B cell (primary cell): ENCODE measurements at regions of chr7 and their contacts with region 1.

Region 1: GRCh38 chr7:130069978-130070860 is at the start of gene KLHDC10:
- DNase-seq: peak; percentile 97
- ATAC-seq: peak; percentile 93
- H3K4me3 ChIP-seq: peak within 1 kb of the TSS; percentile 68 to 90 (median 69)
- H3K4me3 Mint-ChIP-seq: peak within 1 kb of the TSS; percentile 89
- H3K27ac ChIP-seq: peak within 1 kb of the TSS; percentile 75 to 84
- H3K27ac Mint-ChIP-seq: peak within 1 kb of the TSS; percentile 88
- H3K4me1 ChIP-seq: peaks cover 22 to 24% of the 10 kb centered on the region in 2 donors
- H3K4me1 Mint-ChIP-seq: peaks cover 36% of the 10 kb centered on the region
- H3K27me3 ChIP-seq: no peaks in the 10 kb centered on the region
- H3K27me3 Mint-ChIP-seq: no peaks in the 10 kb centered on the region
- CTCF ChIP-seq: no peak
- total RNA-seq, gene KLHDC10: 25.3 and 25.7 TPM in 2 replicates

Region 2: GRCh38 chr7:129952653-129953560 is 117.3 kb before region 1 on chr7 and contains the start of gene UBE2H:
- CTCF ChIA-PET with region 1: no interaction called
- POLR2A ChIA-PET with region 1: no interaction called
- intact Hi-C with region 1: loop called (anchors 1 kb)
- DNase-seq: peak; percentile 96
- ATAC-seq: peak; percentile 73
- H3K4me3 ChIP-seq: peak within 1 kb of the TSS; percentile 72 to 95 (median 93)
- H3K4me3 Mint-ChIP-seq: peak within 1 kb of the TSS; percentile 95
- H3K27ac ChIP-seq: peak within 1 kb of the TSS; percentile 87 to 94
- H3K27ac Mint-ChIP-seq: peak within 1 kb of the TSS; percentile 99
- H3K4me1 ChIP-seq: peaks cover 32 to 40% of the 10 kb centered on the region in 2 donors
- H3K4me1 Mint-ChIP-seq: peaks cover 16% of the 10 kb centered on the region
- H3K27me3 ChIP-seq: no peaks in the 10 kb centered on the region
- H3K27me3 Mint-ChIP-seq: no peaks in the 10 kb centered on the region
- CTCF ChIP-seq: no peak
- total RNA-seq, gene UBE2H: 43.6 and 54.1 TPM in 2 replicates

Region 3: GRCh38 chr7:130010689-130011412 is 59.4 kb before region 1 on chr7:
- CTCF ChIA-PET with region 1: no interaction called
- POLR2A ChIA-PET with region 1: no interaction called
- intact Hi-C with region 1: no loop called
- DNase-seq: peak; percentile 91
- ATAC-seq: peak; percentile 97
- H3K4me3 ChIP-seq: no peak overlapping the region
- H3K4me3 Mint-ChIP-seq: no peak overlapping the region
- H3K27ac ChIP-seq: no peak overlapping the region
- H3K27ac Mint-ChIP-seq: peak overlapping the region; percentile 34
- H3K4me1 ChIP-seq: peaks cover 0 to 6% of the 10 kb centered on the region in 2 donors
- H3K4me1 Mint-ChIP-seq: peaks cover 6% of the 10 kb centered on the region
- H3K27me3 ChIP-seq: no peaks in the 10 kb centered on the region
- H3K27me3 Mint-ChIP-seq: no peaks in the 10 kb centered on the region
- CTCF ChIP-seq: peak; percentile 86

Region 4: DNA sequence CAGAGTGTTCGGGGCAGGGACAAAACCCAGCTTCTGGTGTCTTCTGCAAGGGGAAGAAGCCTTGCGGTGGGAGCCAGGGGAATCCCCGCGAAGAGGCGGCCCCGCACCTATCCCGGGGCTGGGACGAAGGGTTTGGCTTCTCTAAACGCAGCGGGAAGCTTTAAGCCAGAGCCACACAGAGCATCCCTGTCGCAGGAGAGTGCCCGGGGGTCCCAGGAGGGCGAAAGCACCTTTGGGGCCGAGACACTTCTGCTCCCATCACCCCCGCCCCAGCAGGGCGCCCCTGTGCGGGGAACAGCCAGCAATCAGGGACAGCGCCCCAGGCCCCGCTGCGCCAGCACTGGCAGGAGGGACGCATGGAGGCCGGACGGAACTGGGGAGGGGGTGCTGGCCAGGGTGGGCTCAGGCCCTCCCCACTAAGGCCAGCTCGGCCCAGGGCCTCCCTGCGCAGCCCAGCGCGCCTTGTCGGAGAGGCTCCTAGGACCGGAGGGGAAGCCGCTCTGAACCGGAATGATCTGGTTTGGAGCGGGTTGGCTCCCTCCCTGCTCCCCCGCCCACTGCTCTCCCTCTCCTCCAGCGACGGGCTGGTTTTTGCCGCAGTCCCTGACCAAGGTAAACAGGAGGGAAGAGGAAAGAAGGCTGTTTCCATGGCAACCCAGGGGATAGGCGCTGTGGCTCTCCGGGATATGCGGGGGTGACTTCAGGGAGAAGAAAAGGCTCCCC is 71.1 kb after region 1 on chr7:
- CTCF ChIA-PET with region 1: interaction called, 3 read pairs
- POLR2A ChIA-PET with region 1: interaction called, 3 read pairs
- intact Hi-C with region 1: loop called (anchors 2 kb)
- DNase-seq: peak; percentile 67
- ATAC-seq: peak; percentile 75
- H3K4me3 ChIP-seq: peak overlapping the region; percentile 30 to 77 (median 72)
- H3K4me3 Mint-ChIP-seq: peak overlapping the region; percentile 91
- H3K27ac ChIP-seq: peak overlapping the region; percentile 85 to 87
- H3K27ac Mint-ChIP-seq: peak overlapping the region; percentile 98
- H3K4me1 ChIP-seq: peaks cover 21 to 29% of the 10 kb centered on the region in 2 donors
- H3K4me1 Mint-ChIP-seq: peaks cover 43% of the 10 kb centered on the region
- H3K27me3 ChIP-seq: no peaks in the 10 kb centered on the region
- H3K27me3 Mint-ChIP-seq: no peaks in the 10 kb centered on the region
- CTCF ChIP-seq: no peak

Region 5: GRCh38 chr7:130440527-130441365 is 370.5 kb after region 1 on chr7 and contains the start of gene CEP41:
- CTCF ChIA-PET with region 1: interaction called, 3 read pairs
- POLR2A ChIA-PET with region 1: interaction called, 3 read pairs
- intact Hi-C with region 1: loop called (anchors 1 kb)
- DNase-seq: peak; percentile 93
- ATAC-seq: peak; percentile 97
- H3K4me3 ChIP-seq: peak within 1 kb of the TSS; percentile 26 to 90 (median 87)
- H3K4me3 Mint-ChIP-seq: peak within 1 kb of the TSS; percentile 99
- H3K27ac ChIP-seq: peak within 1 kb of the TSS; percentile 66 to 68
- H3K27ac Mint-ChIP-seq: peak within 1 kb of the TSS; percentile 96
- H3K4me1 ChIP-seq: peaks cover 4 to 10% of the 10 kb centered on the region in 2 donors
- H3K4me1 Mint-ChIP-seq: peaks cover 13% of the 10 kb centered on the region
- H3K27me3 ChIP-seq: no peaks in the 10 kb centered on the region
- H3K27me3 Mint-ChIP-seq: peaks cover 6% of the 10 kb centered on the region
- CTCF ChIP-seq: no peak
- total RNA-seq, gene CEP41: 5.9 and 6.1 TPM in 2 replicates

Region 6: DNA sequence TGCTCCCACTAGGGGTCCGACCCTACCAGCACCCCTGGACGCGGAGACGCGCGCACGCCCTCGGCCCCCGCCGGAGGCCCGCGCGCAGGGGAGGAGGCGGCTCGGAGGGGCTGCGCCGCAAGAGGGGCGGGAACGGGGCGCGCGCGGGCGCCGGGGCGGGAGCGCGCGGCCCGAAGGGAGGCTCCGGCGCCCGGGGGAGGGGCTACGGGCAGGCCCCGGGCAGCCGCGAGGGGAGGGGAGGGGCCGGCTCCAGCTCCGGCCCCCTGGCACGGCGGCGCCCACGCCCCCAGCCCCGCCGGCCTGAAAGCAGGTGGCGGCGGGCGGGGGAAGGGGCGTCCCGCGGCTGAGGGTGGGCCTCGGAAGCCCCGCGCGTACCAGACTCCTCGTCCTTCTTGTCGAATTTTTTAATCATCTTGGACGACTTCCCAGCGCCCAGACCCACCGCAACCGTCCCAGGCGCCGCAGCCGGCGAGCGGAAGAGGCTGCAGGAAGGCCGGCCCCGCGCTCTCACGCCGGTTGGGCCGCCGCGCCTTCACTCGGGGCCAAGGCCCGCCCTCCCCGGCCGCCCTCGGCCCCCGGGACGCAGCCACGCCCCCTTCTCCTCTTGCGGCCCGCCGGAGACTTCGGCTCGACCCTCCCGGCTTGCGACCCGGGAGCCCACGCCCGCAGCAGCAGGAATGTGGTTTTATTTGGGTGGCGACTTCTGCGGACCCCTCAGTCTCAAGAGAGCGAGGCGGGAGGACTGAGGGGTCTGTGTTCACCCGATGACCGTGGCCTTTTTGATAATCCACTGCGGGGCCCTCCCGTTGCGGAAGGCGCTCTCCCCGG is 598.3 kb after region 1 on chr7 and contains the start of gene COPG2:
- CTCF ChIA-PET with region 1: interaction called, 5 read pairs
- POLR2A ChIA-PET with region 1: no interaction called
- intact Hi-C with region 1: loop called (anchors 1 kb)
- DNase-seq: peak; percentile 92
- ATAC-seq: peak; percentile 91
- H3K4me3 ChIP-seq: peak within 1 kb of the TSS; percentile 69 to 83 (median 74)
- H3K4me3 Mint-ChIP-seq: peak within 1 kb of the TSS; percentile 96
- H3K27ac ChIP-seq: peak within 1 kb of the TSS in 1 of 2 donors; percentile 66
- H3K27ac Mint-ChIP-seq: peak within 1 kb of the TSS; percentile 90
- H3K4me1 ChIP-seq: peaks cover 10 to 11% of the 10 kb centered on the region in 2 donors
- H3K4me1 Mint-ChIP-seq: peaks cover 15% of the 10 kb centered on the region
- H3K27me3 ChIP-seq: no peaks in the 10 kb centered on the region
- H3K27me3 Mint-ChIP-seq: peaks cover 11% of the 10 kb centered on the region
- CTCF ChIP-seq: no peak
- total RNA-seq, gene COPG2: 13.4 and 14.7 TPM in 2 replicates

Region 7: DNA sequence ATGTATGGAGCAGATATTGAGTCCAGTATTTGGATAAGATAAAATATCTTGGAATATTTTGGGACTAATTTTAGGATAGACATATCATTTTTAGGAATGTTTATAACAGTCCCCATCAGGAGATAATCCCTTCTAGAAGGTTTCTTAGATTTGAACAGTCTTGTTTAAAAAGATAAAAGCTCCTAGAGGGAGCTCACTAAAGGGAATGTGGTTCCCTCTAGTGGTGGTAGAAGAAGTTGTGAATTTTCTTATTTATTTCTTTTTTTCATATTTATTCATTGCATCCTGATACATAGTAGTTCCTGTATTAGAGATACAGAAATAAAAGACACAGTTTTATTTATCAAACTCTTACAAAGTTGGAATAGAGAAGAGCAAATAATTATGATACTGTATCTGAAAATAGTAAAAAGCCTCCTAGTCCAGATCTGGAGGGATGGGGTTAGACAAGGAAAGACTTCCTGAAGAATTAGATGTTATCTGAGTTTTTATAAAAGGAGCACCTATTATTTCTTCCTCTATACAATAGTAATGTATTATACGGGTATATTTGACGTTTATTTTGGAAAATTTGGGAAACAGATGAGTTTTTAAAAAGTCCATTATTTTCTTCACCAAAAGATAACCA is 688.3 kb after region 1 on chr7:
- CTCF ChIA-PET with region 1: interaction called, 93 read pairs
- POLR2A ChIA-PET with region 1: no interaction called
- intact Hi-C with region 1: loop called (anchors 1 kb)
- DNase-seq: peak; percentile 72
- ATAC-seq: peak; percentile 54
- H3K4me3 ChIP-seq: no peak overlapping the region
- H3K4me3 Mint-ChIP-seq: no peak overlapping the region
- H3K27ac ChIP-seq: no peak overlapping the region
- H3K27ac Mint-ChIP-seq: no peak overlapping the region
- H3K4me1 ChIP-seq: no peaks in the 10 kb centered on the region
- H3K4me1 Mint-ChIP-seq: no peaks in the 10 kb centered on the region
- H3K27me3 ChIP-seq: peaks cover 0 to 3% (median 0%) of the 10 kb centered on the region in 4 experiments
- H3K27me3 Mint-ChIP-seq: no peaks in the 10 kb centered on the region
- CTCF ChIP-seq: peak; percentile 93

Region 8: DNA sequence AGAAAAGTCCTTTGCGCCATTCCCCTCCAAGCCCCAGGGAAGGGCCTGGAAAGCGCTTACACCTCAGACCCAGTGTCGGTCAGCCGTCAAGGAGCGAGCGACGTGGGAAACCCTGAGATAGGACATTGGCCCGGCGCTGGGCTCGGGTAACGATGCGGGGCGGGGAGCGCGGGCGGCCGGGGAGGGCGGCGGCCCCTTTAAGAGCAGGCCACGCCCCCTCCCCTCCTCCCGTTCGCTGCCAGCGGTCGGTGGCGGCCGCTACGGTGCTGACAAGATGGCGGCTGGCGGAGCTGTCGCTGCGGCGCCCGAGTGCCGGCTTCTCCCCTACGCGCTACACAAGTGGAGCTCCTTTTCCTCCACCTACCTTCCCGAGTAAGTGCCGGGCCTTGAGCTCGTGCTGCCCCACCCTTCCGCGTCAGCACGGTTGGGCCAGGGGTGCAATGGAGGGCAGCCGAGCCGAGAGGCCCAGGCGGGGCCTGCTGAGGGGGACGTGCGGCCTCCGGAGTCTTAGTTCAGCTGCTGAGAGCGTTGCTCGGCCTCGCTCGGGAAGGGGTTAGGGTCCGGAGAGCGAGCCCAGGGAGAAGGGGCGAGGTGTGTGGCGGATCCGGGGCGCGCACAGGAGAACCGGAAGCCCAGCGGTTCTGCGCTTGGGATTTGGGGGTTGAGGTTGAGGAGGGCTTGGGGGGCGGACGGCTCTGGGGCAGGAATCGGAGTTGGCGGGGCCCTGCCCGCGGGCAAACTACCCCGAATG is 1257.6 kb after region 1 on chr7 and contains the start of gene MKLN1:
- CTCF ChIA-PET with region 1: no interaction called
- POLR2A ChIA-PET with region 1: no interaction called
- intact Hi-C with region 1: loop called (anchors 10 kb)
- DNase-seq: peak; percentile 93
- ATAC-seq: peak; percentile 97
- H3K4me3 ChIP-seq: peak within 1 kb of the TSS; percentile 93 to 99 (median 96)
- H3K4me3 Mint-ChIP-seq: peak within 1 kb of the TSS; percentile 85
- H3K27ac ChIP-seq: peak within 1 kb of the TSS; percentile 88 to 91
- H3K27ac Mint-ChIP-seq: peak within 1 kb of the TSS; percentile 95
- H3K4me1 ChIP-seq: peaks cover 26 to 29% of the 10 kb centered on the region in 2 donors
- H3K4me1 Mint-ChIP-seq: peaks cover 62% of the 10 kb centered on the region
- H3K27me3 ChIP-seq: no peaks in the 10 kb centered on the region
- H3K27me3 Mint-ChIP-seq: no peaks in the 10 kb centered on the region
- CTCF ChIP-seq: no peak
- total RNA-seq, gene MKLN1: 68.4 and 73.6 TPM in 2 replicates